Activated CD4-positive, alpha-beta memory T cell treated with anti-CD3 and anti-CD28 coated beads for 36 hours (primary cell): ENCODE measurements at regions of chr15 and their contacts with region 1.

Region 1: DNA sequence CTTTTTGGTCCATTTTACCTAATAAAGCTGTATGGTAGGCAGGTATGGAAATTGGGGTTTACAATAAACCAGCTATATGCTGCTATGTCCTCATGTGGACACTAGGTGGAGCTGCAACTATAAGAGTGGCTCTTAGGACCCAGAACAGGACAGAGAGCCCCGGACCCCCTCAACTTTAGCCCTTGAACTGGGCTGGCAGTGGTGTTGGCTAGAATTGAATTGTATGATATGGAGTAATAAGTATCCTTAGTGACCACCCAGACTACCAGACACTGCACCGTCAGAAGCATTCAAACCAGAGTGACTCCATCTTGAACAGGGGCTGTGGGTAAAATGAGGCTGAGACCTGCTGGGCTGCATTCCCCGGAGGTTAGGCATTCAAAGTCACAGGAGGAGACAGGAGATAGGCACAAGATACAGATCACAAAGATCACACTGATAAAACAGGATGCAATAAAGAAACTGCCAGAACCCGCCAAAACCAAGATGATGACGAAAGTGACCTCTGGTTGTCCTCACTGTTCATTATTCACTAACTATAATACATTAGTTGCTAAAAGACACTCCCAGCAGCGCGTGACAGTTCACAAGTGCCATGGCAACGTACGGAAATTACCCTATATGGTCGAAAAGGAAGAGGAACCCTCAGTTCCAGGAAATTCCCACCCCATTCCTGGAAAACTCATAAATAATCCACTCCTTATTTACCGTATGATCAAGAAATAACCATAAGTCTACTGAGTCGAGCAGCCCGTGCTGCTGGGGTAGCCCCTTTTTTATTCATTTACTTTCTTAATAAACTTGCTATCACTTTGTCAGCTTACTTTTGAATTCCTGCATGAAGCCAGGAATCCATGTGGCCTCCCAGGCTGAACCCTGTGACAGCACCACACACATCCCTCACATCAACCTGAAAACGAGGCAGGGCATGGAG is 68.7 kb upstream of the BLM start:
- DNase-seq: peak; percentile 81
- H3K4me3 Mint-ChIP-seq: peak overlapping the region; percentile 53
- H3K27ac Mint-ChIP-seq: peak overlapping the region; percentile 92
- H3K4me1 Mint-ChIP-seq: peaks cover 24% of the 10 kb centered on the region
- H3K27me3 Mint-ChIP-seq: no peaks in the 10 kb centered on the region

Region 2: GRCh38 chr15:90529371-90530249 is 118.8 kb before region 1 on chr15 and contains the start of gene CRTC3:
- CTCF ChIA-PET with region 1: interaction called, 10 read pairs
- POLR2A ChIA-PET with region 1: no interaction called
- intact Hi-C with region 1: no loop called
- DNase-seq: peak; percentile 64
- H3K4me3 Mint-ChIP-seq: peak within 1 kb of the TSS; percentile 91
- H3K27ac Mint-ChIP-seq: peak within 1 kb of the TSS; percentile 81
- H3K4me1 Mint-ChIP-seq: peaks cover 39% of the 10 kb centered on the region
- H3K27me3 Mint-ChIP-seq: no peaks in the 10 kb centered on the region
- total RNA-seq, gene CRTC3: 34.7 to 37.8 TPM

Region 3: DNA sequence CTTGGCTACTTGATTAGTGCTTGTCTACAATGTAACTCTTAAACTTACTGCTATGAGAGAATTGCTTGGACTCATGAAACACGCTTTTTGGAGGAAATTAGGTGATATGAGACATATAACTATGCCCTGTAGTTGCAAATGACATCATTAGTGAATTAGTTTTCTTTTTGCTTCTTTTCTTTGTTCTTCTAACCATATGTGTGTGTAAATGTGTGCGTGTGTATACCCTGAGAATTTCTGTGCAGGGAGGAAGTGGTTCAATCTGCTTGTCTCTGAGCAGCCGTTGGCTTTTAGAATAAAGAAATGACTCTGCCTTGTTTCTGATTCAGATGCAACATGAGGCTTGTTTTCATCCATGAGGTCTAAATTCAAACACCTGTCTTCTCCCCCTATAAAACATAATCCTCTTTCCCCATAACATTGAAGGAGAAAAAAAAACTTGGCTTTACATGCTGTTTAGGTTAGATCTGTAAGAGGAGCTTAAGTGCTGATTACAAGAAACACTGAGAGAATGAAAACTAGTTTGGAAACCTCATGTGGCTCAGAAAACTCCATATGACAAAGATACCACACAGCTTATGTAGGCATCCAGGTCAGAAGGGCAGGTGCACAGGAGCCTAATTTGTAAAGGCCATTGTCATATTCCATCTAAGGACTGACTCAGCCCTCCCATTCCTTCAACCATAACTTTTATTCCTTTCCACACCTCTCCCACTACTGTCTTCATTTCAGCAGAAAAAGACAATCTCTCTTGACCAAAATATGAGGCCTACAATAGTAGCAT is 38.2 kb after region 1 on chr15:
- CTCF ChIA-PET with region 1: interaction called, 12 read pairs
- POLR2A ChIA-PET with region 1: no interaction called
- intact Hi-C with region 1: loop called (anchors 1 kb)
- DNase-seq: peak; percentile 46
- H3K4me3 Mint-ChIP-seq: no peak overlapping the region
- H3K27ac Mint-ChIP-seq: peak overlapping the region; percentile 90
- H3K4me1 Mint-ChIP-seq: peaks cover 18% of the 10 kb centered on the region
- H3K27me3 Mint-ChIP-seq: peaks cover 3% of the 10 kb centered on the region

Region 4: DNA sequence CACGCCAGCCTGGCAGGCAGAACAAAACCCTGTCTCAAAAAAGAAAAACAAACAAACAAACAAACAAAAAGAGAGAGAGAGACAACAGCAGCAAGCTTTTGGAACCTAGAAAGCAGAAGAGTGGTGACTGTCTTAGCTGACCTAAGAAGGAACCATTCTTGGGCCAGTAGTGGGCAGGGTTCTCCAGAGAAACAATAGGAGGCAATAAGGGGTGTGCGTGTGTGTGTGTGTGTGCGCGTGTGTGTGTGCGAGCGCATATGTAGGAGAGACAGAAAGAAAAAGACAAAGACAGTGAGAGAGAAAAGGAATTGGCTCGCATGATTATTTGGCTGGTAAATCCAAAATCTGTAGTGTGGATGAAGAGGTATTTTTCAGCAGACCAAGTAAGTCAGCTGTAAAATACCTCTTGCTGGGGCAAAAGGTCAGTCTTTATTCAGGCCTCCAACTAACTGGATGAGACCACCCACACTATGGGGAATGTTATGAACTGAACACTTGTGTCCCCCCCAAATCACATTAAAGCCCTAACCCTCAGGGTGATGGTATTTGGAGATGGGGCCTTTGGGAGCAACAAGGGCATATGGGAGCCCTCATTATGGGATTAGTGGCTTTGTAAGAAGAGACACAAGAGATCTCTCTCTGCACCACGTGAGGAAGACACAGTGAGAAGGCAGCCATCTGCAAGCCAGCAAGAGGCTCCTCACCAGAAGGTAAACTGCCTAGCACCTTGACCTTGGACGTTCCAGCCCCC is 53.7 kb after region 1 on chr15:
- CTCF ChIA-PET with region 1: interaction called, 7 read pairs
- POLR2A ChIA-PET with region 1: no interaction called
- intact Hi-C with region 1: loop called (anchors 1 kb)
- DNase-seq: no peak
- H3K4me3 Mint-ChIP-seq: no peak overlapping the region
- H3K27ac Mint-ChIP-seq: no peak overlapping the region
- H3K4me1 Mint-ChIP-seq: peaks cover 4% of the 10 kb centered on the region
- H3K27me3 Mint-ChIP-seq: no peaks in the 10 kb centered on the region

Region 5: DNA sequence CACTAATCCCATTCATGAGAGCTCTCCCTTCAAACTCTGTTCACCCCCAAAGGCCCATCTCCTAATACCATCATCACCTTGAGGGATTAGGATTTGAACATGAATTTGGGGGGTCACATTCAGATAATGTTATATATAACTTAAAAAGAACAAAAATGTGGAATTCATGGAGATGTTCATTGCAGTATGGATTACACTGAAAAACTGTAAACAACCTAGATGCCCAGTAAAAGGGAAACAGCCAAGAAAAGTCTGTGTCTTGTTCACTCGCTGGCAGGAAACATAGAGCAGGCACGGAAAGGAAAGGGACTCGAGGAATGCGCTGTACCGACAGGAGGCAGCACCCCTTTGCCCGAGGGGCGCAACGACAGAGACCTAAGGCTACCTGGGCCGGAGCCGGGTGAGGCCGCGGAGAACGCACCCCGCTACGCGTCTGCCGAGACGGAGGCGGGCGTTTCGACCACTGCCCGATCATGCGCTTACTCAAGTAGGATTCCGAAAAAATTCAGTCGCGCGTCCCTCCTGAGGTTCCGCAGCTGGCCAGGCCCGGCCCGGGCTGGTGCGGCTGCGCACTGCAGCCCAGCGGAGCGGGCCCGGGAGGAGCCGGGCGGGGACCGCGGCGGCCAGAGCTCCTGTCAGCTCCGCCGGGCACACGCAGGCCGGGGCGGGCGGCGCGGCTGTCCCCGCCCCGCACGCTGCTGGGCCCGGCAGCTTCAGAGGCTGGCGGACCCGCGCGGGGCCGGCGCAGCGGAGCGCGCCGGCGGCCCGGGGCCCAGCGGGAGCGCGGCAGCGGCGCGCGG is 253.8 kb after region 1 on chr15:
- CTCF ChIA-PET with region 1: interaction called, 12 read pairs
- POLR2A ChIA-PET with region 1: no interaction called
- intact Hi-C with region 1: no loop called
- DNase-seq: peak; percentile 82
- H3K4me3 Mint-ChIP-seq: peak overlapping the region; percentile 83
- H3K27ac Mint-ChIP-seq: peak overlapping the region; percentile 88
- H3K4me1 Mint-ChIP-seq: peaks cover 25% of the 10 kb centered on the region
- H3K27me3 Mint-ChIP-seq: no peaks in the 10 kb centered on the region